Endothelial cell of umbilical vein (primary cell): ENCODE measurements at regions of chr18 and their contacts with region 1.

Region 1: GRCh38 chr18:54444319-54444914 is 86.7 kb downstream of the C18orf54 start:
- DNase-seq: peak; percentile 66
- H3K4me3 ChIP-seq: no peak overlapping the region
- H3K27ac ChIP-seq: no peak overlapping the region
- H3K4me1 ChIP-seq: no peaks in the 10 kb centered on the region
- H3K27me3 ChIP-seq: peaks cover 3 to 5% of the 10 kb centered on the region in 2 experiments
- CTCF ChIP-seq: peak; percentile 59 to 71
- POLR2A ChIP-seq: no peak

Region 2: DNA sequence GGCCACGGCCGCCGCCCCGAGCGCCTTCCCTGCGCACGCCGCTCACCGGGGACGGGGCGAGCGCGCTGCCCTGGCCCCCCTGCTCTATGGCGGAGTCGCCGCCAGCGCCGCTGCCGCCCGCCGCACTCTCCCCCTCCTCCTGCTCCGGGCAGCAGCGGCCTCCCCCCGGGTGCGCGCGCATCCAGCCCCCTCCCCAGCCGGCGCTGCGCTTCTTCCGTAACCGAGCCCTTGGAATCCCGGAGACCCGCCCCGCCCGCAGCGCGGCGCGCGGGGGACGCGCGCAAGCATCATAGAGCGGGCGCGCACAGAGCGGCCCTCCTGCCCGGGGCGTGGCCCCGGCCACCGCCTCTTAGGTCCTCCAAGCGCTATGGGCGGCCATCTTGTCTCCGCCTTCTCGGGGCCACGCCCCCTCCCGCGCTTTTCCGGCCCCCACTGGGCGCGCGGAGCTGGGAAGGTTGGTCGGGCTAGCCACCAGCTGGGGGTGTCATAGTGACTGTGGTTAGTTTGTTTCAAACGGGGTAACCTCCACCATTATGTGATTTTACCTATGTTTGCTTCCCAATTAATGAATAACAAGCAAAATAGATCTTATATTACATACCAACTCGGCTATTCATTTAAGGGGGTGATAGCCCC is 219.9 kb before region 1 on chr18 and contains the start of gene MBD2:
- CTCF ChIA-PET with region 1: no interaction called
- POLR2A ChIA-PET with region 1: no interaction called
- dilution Hi-C with region 1: no loop called
- intact Hi-C with region 1: no loop called
- DNase-seq: peak; percentile 98
- H3K4me3 ChIP-seq: peak within 1 kb of the TSS; percentile 63 to 79 (median 73)
- H3K27ac ChIP-seq: peak within 1 kb of the TSS; percentile 82
- H3K4me1 ChIP-seq: peaks cover 23% of the 10 kb centered on the region
- H3K27me3 ChIP-seq: no peaks in the 10 kb centered on the region
- CTCF ChIP-seq: peak in 1 of 2 donors; percentile 16
- POLR2A ChIP-seq: peak; percentile 55
- total RNA-seq, gene MBD2: 105 and 110 TPM in 2 replicates

Region 3: GRCh38 chr18:54416436-54416835 is 28.0 kb before region 1 on chr18:
- CTCF ChIA-PET with region 1: no interaction called
- POLR2A ChIA-PET with region 1: no interaction called
- dilution Hi-C with region 1: no loop called
- intact Hi-C with region 1: no loop called
- DNase-seq: no peak
- H3K4me3 ChIP-seq: no peak overlapping the region
- H3K27ac ChIP-seq: no peak overlapping the region
- H3K4me1 ChIP-seq: no peaks in the 10 kb centered on the region
- H3K27me3 ChIP-seq: peaks cover 1 to 3% of the 10 kb centered on the region in 2 experiments
- CTCF ChIP-seq: no peak
- POLR2A ChIP-seq: no peak

Region 4: DNA sequence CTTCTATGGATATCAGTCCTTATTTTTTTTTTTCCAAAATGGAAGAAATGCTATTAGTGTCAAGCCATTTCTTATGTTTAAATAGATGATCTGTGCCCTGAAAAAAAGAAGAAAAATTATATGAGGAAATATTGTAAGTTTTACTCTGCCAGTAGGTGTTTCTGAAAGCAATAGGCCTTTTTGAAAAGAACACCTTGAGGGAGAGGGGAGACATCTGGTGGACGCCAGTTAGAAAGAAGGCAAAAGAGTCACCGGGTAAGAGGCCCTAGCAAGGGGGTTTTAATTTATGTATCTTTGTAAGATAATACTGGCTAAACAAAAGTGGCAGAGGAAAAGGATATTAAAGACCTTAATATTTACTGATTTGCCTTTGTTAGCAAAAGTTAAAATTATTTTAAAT is 202.8 kb after region 1 on chr18:
- CTCF ChIA-PET with region 1: interaction called, 10 read pairs
- POLR2A ChIA-PET with region 1: no interaction called
- dilution Hi-C with region 1: no loop called
- intact Hi-C with region 1: loop called (anchors 1 kb)
- DNase-seq: peak; percentile 19
- H3K4me3 ChIP-seq: no peak overlapping the region
- H3K27ac ChIP-seq: no peak overlapping the region
- H3K4me1 ChIP-seq: no peaks in the 10 kb centered on the region
- H3K27me3 ChIP-seq: peaks cover 5 to 6% of the 10 kb centered on the region in 2 experiments
- CTCF ChIP-seq: peak in 1 of 2 donors; percentile 7
- POLR2A ChIP-seq: no peak

Region 5: DNA sequence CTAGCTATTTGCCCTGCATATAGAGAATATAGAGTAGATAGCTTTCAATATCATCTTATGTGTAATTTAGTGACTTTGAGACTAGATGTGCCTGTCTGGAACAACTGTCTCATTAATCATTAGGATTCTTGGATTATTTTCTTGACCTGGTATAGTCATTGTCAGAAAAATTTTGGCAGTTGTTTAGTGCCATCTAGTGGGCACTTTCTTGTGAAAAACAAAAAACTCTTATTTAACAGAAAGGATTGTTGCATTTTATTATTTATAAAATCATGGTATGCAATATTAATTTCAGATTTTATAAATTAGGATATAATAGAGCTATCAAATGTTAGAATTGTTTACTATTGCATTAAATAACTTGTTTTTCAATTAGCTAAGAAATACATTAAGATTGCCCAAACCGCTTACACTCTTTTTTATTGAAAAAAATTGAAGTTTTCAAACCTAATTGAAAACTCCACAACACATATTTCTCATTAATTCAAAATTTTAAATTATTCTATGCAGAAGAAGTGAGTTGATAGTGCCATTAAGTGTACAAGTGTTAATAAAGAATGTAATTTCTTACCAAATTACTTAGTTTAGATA is 227.0 kb after region 1 on chr18:
- CTCF ChIA-PET with region 1: interaction called, 79 read pairs
- POLR2A ChIA-PET with region 1: no interaction called
- dilution Hi-C with region 1: no loop called
- intact Hi-C with region 1: loop called (anchors 1 kb)
- DNase-seq: peak; percentile 46
- H3K4me3 ChIP-seq: no peak overlapping the region
- H3K27ac ChIP-seq: no peak overlapping the region
- H3K4me1 ChIP-seq: no peaks in the 10 kb centered on the region
- H3K27me3 ChIP-seq: no peaks in the 10 kb centered on the region
- CTCF ChIP-seq: peak; percentile 20 to 33
- POLR2A ChIP-seq: no peak

Region 6: GRCh38 chr18:54742659-54743604 is 298.5 kb after region 1 on chr18:
- CTCF ChIA-PET with region 1: no interaction called
- POLR2A ChIA-PET with region 1: no interaction called
- dilution Hi-C with region 1: no loop called
- intact Hi-C with region 1: no loop called
- DNase-seq: peak; percentile 37
- H3K4me3 ChIP-seq: no peak overlapping the region
- H3K27ac ChIP-seq: no peak overlapping the region
- H3K4me1 ChIP-seq: peaks cover 7% of the 10 kb centered on the region
- H3K27me3 ChIP-seq: no peaks in the 10 kb centered on the region
- CTCF ChIP-seq: no peak
- POLR2A ChIP-seq: no peak

Region 7: DNA sequence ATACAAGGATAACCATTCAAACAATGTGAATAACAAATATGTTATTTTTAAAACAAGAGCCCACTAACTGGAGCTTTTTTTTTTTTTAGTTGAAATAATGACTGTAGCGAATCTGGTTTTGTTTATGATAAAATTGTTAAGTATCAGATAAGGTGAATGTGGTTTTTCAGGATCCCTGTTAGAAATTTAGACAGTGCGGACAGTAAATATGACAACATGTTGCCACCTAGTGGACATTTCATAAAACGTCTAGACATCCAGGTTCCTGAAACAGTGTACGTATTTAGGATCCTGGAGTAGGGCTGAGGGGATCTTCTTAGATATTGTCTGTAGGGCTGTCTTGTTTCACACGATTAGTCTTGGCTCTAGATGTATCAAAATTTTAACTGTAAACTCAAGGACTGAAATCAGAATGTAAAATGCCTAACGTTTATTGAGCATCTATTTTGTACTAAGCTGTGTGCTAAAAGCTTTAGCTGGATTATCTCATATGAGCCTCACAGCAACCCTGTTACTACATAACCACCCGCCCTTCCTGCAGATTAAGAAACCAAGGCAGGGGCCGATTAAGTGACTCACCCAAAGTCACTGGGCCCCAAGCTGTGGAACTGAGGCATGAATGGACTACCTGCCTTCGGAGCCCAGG is 538.7 kb after region 1 on chr18:
- CTCF ChIA-PET with region 1: interaction called, 24 read pairs
- POLR2A ChIA-PET with region 1: no interaction called
- dilution Hi-C with region 1: no loop called
- intact Hi-C with region 1: loop called (anchors 1 kb)
- DNase-seq: peak; percentile 59
- H3K4me3 ChIP-seq: no peak overlapping the region
- H3K27ac ChIP-seq: no peak overlapping the region
- H3K4me1 ChIP-seq: no peaks in the 10 kb centered on the region
- H3K27me3 ChIP-seq: no peaks in the 10 kb centered on the region
- CTCF ChIP-seq: peak; percentile 33 to 41
- POLR2A ChIP-seq: no peak